Activated naive CD4-positive, alpha-beta T cell treated with anti-CD3 and anti-CD28 coated beads for 36 hours (primary cell): ENCODE measurements at regions of chr18 and their contacts with region 1.

Region 1: GRCh38 chr18:70431203-70431624 is 142.4 kb downstream of the SOCS6 start:
- DNase-seq: no peak
- H3K4me3 Mint-ChIP-seq: no peak overlapping the region
- H3K27ac Mint-ChIP-seq: no peak overlapping the region
- H3K4me1 Mint-ChIP-seq: no peaks in the 10 kb centered on the region
- H3K27me3 Mint-ChIP-seq: no peaks in the 10 kb centered on the region

Region 2: GRCh38 chr18:68847219-68847837 is 1583.9 kb before region 1 on chr18:
- CTCF ChIA-PET with region 1: no interaction called
- intact Hi-C with region 1: loop called (anchors 1 kb)
- DNase-seq: no peak
- H3K4me3 Mint-ChIP-seq: no peak overlapping the region
- H3K27ac Mint-ChIP-seq: no peak overlapping the region
- H3K4me1 Mint-ChIP-seq: no peaks in the 10 kb centered on the region
- H3K27me3 Mint-ChIP-seq: no peaks in the 10 kb centered on the region

Region 3: DNA sequence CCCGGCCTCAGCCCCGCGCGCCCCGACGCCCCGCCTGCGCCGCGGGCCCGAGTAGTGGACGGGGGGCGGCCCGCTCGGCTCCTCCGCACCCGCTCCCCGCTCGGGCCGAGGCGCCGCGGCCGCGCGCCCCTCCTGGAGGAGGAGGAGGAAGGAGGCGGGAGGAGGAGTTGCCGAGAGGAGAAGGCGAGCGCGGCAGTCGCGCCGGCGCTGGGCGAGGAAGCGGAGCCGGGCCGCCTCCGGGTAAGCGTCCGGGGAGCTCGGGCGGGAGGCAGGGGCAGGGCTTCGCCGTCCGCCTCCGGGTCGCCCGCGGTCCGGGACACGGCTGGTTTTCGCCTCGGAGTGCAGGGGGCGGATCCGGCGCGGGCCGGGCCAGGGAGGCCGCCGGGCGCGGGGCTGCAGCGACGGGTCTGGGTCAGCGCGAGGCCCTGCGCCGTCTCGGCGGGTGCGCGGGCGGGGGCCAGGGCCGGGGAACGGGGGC is 142.3 kb before region 1 on chr18 and contains the start of gene SOCS6:
- CTCF ChIA-PET with region 1: interaction called, 3 read pairs
- intact Hi-C with region 1: loop called (anchors 5 kb)
- DNase-seq: peak; percentile 54
- H3K4me3 Mint-ChIP-seq: peak within 1 kb of the TSS; percentile 83
- H3K27ac Mint-ChIP-seq: no peak within 1 kb of the TSS
- H3K4me1 Mint-ChIP-seq: peaks cover 4% of the 10 kb centered on the region
- H3K27me3 Mint-ChIP-seq: peaks cover 42% of the 10 kb centered on the region
- total RNA-seq, gene SOCS6: 0.42 to 0.60 TPM